CD4-positive, alpha-beta memory T cell (primary cell): ENCODE measurements at regions of chr1 and their contacts with region 1.

Region 1: DNA sequence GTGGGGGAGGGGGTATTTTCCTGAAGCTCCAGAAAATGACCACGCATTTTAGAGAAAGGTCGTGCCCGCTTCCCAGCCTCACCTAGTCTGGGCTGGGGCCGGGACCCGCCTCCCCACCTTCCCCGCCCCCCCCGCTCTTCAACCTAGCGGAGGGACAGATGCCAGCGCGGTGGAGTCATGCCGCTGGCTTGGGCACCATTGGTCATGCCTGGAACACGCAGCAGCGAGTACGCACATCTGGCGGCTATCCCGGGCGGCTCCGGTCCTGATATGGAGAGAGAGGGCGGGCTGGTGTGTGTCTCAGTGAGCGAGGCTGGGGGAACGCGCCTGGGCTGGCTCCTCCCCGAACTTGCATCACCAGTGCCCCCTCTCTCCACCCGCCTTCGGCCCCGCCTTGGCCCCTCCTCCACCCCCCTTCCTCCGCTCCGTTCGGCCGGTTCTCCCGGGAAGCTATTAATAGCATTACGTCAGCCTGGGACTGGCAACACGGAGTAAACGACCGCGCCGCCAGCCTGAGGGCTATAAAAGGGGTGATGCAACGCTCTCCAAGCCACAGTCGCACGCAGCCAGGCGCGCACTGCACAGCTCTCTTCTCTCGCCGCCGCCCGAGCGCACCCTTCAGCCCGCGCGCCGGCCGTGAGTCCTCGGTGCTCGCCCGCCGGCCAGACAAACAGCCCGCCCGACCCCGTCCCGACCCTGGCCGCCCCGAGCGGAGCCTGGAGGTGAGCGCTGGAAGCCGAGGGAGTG is at the start of gene ATF3:
- DNase-seq: peak; percentile 60 to 94 (median 64)
- H3K4me3 ChIP-seq: peak within 1 kb of the TSS; percentile 43 to 68
- H3K4me3 Mint-ChIP-seq: peak within 1 kb of the TSS; percentile 95 to 97 (median 97)
- H3K27ac ChIP-seq: peak within 1 kb of the TSS; percentile 48
- H3K27ac Mint-ChIP-seq: peak within 1 kb of the TSS; percentile 68 to 96 (median 93)
- H3K4me1 ChIP-seq: peaks cover 29% of the 10 kb centered on the region
- H3K4me1 Mint-ChIP-seq: peaks cover 12 to 43% (median 23%) of the 10 kb centered on the region in 4 donors
- H3K27me3 ChIP-seq: peaks cover 32% of the 10 kb centered on the region
- H3K27me3 Mint-ChIP-seq: peaks cover 38 to 49% of the 10 kb centered on the region in 2 donors
- total RNA-seq, gene ATF3: 2.7 to 3.1 TPM

Region 2: DNA sequence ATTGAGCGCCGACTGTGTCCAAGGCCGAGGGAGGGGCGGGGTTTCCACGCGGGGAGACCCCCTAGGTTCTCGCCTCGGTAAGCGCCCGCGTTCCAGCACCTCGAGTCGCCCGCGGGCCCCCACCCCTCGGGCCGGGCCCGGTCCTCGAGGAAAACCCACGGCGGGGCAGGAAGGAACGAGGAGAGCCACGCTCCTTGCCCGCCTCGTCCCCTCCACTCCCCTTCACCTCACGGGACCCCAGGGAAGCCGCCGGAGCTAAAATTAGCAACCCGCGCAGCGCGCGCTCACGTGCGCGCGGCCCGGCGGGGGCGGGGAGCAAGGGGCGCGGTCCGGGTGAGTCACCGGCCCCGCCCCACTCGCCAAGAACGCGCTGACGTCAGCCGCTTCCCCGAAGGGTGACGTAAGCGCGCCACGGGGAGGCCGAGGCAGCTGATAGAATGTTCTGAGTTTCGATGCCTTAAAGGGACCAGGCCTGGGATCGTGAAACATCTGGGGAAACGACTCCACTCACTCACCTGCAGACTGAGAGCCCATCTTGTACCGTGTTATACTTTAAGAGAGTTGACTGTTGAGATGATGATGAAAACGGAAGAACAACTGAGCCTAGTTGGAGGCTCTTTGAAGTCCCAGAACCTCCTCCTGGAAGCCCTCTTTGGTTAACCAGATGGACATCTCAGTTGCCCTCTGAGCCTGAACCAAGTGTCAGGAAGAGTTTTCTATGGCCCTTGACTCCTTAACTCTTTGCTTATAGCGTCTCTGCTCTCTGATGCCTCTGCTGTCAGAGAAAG is 49.5 kb before region 1 on chr1:
- CTCF ChIA-PET with region 1: interaction called, 3 read pairs
- POLR2A ChIA-PET with region 1: interaction called, 17 read pairs
- intact Hi-C with region 1: loop called (anchors 1 kb)
- DNase-seq: peak; percentile 90 to 92 (median 91)
- H3K4me3 ChIP-seq: peak overlapping the region in 1 of 2 donors; percentile 64
- H3K4me3 Mint-ChIP-seq: peak overlapping the region; percentile 83 to 93 (median 86)
- H3K27ac ChIP-seq: peak overlapping the region; percentile 79
- H3K27ac Mint-ChIP-seq: peak overlapping the region; percentile 81 to 100 (median 99)
- H3K4me1 ChIP-seq: peaks cover 11% of the 10 kb centered on the region
- H3K4me1 Mint-ChIP-seq: peaks cover 2 to 16% (median 8%) of the 10 kb centered on the region in 4 donors
- H3K27me3 ChIP-seq: no peaks in the 10 kb centered on the region
- H3K27me3 Mint-ChIP-seq: peaks cover 4% of the 10 kb centered on the region in 2 donors

Region 3: GRCh38 chr1:212566522-212567479 is 41.6 kb before region 1 on chr1:
- CTCF ChIA-PET with region 1: no interaction called
- POLR2A ChIA-PET with region 1: no interaction called
- intact Hi-C with region 1: loop called (anchors 2 kb)
- DNase-seq: peak; percentile 34 to 75 (median 41)
- H3K4me3 ChIP-seq: peak overlapping the region; percentile 63 to 82
- H3K4me3 Mint-ChIP-seq: peak overlapping the region; percentile 90 to 99 (median 96)
- H3K27ac ChIP-seq: peak overlapping the region; percentile 34
- H3K27ac Mint-ChIP-seq: peak overlapping the region; percentile 54 to 95 (median 93)
- H3K4me1 ChIP-seq: peaks cover 13% of the 10 kb centered on the region
- H3K4me1 Mint-ChIP-seq: peaks cover 7 to 15% (median 10%) of the 10 kb centered on the region in 4 donors
- H3K27me3 ChIP-seq: no peaks in the 10 kb centered on the region
- H3K27me3 Mint-ChIP-seq: no peaks in the 10 kb centered on the region

Region 4: DNA sequence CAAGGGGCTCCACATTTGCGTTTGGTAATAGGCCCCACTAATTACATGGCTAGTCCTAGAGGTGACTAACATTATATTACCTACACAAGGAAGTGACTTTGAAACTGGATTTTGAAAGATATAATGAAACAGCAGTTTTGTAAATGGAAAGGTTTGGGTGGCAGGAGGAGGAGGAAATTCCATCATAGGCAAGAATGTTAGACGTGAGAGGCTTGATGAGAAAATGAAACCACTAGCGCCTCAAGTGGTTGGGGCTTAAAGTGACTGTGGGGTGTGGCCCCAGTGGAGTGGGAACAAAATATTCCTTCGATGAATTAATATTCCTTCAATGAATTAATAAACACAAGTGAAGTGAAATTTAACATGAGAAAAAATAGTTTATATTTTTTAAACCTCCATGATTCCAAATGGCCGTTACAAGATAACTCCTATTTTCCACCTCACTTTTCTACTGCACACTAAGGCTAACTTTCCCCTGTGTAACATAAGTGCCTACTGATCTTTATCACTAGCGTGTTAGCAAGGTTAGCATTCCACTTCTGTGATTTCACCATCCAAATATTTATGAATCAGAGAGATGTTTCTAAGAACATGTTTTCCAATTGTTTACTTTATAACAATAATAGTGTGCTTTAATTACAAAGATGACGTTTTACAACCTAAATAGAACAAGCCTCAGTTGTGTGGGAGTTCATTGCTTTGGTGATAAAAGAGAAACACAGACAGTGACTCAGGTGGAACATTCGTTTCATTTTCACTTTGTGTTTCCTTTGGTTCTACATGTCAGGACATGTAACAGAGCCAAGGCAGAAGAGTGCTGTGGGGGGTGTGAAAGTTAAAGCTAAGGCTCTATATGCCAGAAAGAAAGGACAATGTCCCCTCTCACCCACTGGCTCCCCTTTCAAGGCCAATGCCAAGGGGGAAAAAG is 12.3 kb before region 1 on chr1:
- CTCF ChIA-PET with region 1: interaction called, 5 read pairs
- POLR2A ChIA-PET with region 1: interaction called, 16 read pairs
- intact Hi-C with region 1: loop called (anchors 1 kb)
- DNase-seq: peak; percentile 44 to 82 (median 70)
- H3K4me3 ChIP-seq: peak overlapping the region; percentile 8 to 24
- H3K4me3 Mint-ChIP-seq: peak overlapping the region; percentile 63 to 83 (median 78)
- H3K27ac ChIP-seq: peak overlapping the region; percentile 37
- H3K27ac Mint-ChIP-seq: peak overlapping the region; percentile 71 to 94 (median 80)
- H3K4me1 ChIP-seq: peaks cover 19% of the 10 kb centered on the region
- H3K4me1 Mint-ChIP-seq: peaks cover 9 to 18% (median 13%) of the 10 kb centered on the region in 4 donors
- H3K27me3 ChIP-seq: no peaks in the 10 kb centered on the region
- H3K27me3 Mint-ChIP-seq: peaks cover 11 to 19% of the 10 kb centered on the region in 2 donors

Region 5: GRCh38 chr1:212827824-212828278 is 219.5 kb after region 1 on chr1:
- CTCF ChIA-PET with region 1: no interaction called
- POLR2A ChIA-PET with region 1: no interaction called
- intact Hi-C with region 1: no loop called
- DNase-seq: no peak
- H3K4me3 ChIP-seq: no peak overlapping the region
- H3K4me3 Mint-ChIP-seq: no peak overlapping the region
- H3K27ac ChIP-seq: no peak overlapping the region
- H3K27ac Mint-ChIP-seq: no peak overlapping the region
- H3K4me1 ChIP-seq: no peaks in the 10 kb centered on the region
- H3K4me1 Mint-ChIP-seq: no peaks in the 10 kb centered on the region
- H3K27me3 ChIP-seq: no peaks in the 10 kb centered on the region
- H3K27me3 Mint-ChIP-seq: peaks cover 0 to 2% of the 10 kb centered on the region in 2 donors